ENCODE measurements at regions of chr9 and their contacts with region 1.

Region 1: GRCh38 chr9:117696141-117696540 is 8.1 kb upstream of the TLR4 start:
- DNase-seq: peak in 2 of 14 experiments; percentile 42 to 57
- ATAC-seq: no peak
- H3K4me3 ChIP-seq: no peak overlapping the region
- H3K4me3 Mint-ChIP-seq: no peak overlapping the region
- H3K27ac ChIP-seq: no peak overlapping the region
- H3K27ac Mint-ChIP-seq: no peak overlapping the region
- H3K4me1 ChIP-seq: no peaks in the 10 kb centered on the region
- H3K4me1 Mint-ChIP-seq: no peaks in the 10 kb centered on the region
- H3K27me3 ChIP-seq: no peaks in the 10 kb centered on the region
- H3K27me3 Mint-ChIP-seq: no peaks in the 10 kb centered on the region
- CTCF ChIP-seq: no peak

Region 2: DNA sequence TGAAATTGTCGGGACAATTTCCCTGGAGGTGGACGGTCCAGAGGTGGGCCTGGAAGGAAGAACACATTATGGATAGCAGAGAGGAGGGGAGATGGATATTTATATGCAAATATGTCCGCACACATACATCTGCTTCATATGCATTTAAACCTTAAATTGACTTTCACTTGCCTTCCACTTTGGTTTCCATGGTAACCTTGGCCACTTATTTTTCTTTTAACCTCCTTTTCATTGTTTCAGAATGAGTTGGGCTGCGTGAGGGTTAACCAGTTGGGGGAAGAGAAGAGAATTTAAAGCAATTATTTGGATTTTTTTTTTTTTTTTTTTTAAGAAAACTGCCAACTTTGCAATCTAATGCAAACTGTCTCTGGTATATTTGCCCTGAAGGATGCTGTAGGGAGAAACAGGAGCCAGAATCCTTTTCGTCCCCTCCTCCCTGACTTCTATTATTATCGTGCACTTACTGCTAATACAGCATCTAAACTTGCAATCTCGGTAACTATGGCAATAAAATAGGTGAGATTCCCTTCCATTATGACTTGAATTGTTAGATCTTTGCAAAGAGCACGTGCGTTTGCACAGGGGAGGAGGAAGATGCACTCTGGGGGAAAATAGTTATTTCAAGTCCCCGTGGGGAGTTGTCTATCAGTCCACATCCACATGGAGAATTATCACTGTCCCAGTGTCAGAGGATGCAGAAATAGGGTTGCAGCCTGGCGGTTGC is 43.6 kb after region 1 on chr9:
- CTCF ChIA-PET with region 1: no interaction called
- POLR2A ChIA-PET with region 1: no interaction called
- intact Hi-C with region 1: loop called in 1 of 2 experiments (anchors 2 kb)
- DNase-seq: no peak
- ATAC-seq: no peak
- H3K4me3 ChIP-seq: no peak overlapping the region
- H3K4me3 Mint-ChIP-seq: no peak overlapping the region
- H3K27ac ChIP-seq: no peak overlapping the region
- H3K27ac Mint-ChIP-seq: no peak overlapping the region
- H3K4me1 ChIP-seq: no peaks in the 10 kb centered on the region
- H3K4me1 Mint-ChIP-seq: no peaks in the 10 kb centered on the region
- H3K27me3 ChIP-seq: peaks cover 0 to 7% of the 10 kb centered on the region in 2 experiments
- H3K27me3 Mint-ChIP-seq: peaks cover 22% of the 10 kb centered on the region
- CTCF ChIP-seq: no peak